ENCODE measurements at regions of chr9 and their contacts with region 1.

Region 1: DNA sequence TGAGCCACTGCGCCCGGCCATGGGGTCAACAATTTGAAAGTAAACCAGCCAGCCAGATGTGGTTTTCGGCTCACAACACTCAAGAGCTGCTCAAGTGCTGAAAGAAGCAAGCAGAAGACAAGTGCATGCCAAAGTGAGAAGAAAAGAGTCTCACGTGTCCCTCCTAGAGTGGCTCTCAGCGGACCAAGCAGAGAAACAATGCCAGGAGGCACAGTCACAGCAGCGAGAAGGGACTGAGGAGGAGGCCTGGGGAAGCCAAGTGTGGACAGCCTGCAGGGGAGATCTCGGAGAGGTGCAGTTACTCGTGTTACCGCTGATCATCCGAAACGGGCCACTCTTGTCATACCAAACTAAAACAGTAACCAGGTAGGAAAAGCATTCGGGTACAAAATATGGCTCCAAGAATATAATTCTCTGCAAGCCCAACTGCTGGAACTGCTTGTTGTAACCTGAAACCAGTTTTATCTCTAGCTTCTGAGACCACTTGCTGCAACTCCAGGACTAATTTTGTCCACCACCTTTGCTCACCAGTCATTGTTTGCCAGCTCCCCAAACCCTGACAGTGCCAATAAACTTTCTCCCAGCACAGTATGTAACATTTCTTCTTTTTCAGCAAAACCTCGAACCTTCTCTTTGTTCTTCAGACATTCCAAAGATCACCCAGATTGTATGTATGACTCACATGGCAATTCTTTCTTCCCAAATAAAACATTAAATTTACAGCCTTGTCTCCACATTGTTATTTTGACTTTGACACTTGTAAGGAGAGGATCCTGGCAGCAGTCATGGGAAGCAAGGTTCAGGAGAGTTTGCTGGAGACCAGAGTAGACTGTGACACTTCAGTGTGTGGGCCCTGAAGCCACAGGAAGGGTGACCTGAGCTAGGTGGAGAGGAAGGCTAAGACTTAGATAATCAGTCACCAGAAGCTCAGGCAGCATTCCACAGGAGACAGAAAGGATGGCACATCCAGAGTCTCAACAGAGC is 6.3 kb downstream of the SLC35D2 start:
- DNase-seq: peak; percentile 95 to 96
- H3K4me3 ChIP-seq: no peak overlapping the region
- H3K27ac ChIP-seq: peak overlapping the region; percentile 76 to 90 (median 87)
- H3K4me1 ChIP-seq: peaks cover 37 to 41% of the 10 kb centered on the region in 2 donors
- H3K27me3 ChIP-seq: no peaks in the 10 kb centered on the region
- CTCF ChIP-seq: peak in 3 of 6 experiments; percentile 10 to 49 (median 28)
- POLR2A ChIP-seq: peak in 1 of 2 donors; percentile 17

Region 2: DNA sequence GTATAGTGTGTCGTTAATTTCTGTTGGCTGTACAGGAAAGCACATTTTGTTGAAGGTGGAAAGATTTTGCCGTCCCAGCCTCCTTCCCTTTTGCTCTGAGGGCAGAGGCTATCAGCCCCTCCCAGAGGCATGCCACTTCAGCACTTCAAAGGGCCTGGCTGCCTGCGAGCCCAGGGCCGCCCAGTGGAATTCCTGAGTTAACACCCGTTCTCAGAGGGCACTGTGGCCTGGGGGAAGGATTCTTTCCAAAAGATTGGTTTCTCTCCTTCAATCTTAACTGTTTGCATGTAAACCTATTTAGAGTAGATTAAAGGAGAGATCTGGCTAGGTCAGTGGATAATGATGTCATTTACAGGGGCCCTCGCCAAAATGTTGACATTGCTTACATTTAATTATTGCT is 1298.2 kb before region 1 on chr9:
- intact Hi-C with region 1: no loop called
- DNase-seq: peak; percentile 79 to 82
- H3K4me3 ChIP-seq: no peak overlapping the region
- H3K27ac ChIP-seq: peak overlapping the region in 2 of 3 donors; percentile 39 to 59
- H3K4me1 ChIP-seq: peaks cover 41 to 53% of the 10 kb centered on the region in 2 donors
- H3K27me3 ChIP-seq: no peaks in the 10 kb centered on the region
- CTCF ChIP-seq: peak in 5 of 6 experiments; percentile 26 to 54 (median 49)
- POLR2A ChIP-seq: no peak

Region 3: GRCh38 chr9:96418074-96418809 is 41.1 kb after region 1 on chr9 and contains the start of gene ZNF367:
- intact Hi-C with region 1: loop called (anchors 5 kb)
- DNase-seq: peak; percentile 98 to 99
- H3K4me3 ChIP-seq: peak within 1 kb of the TSS; percentile 30 to 71 (median 60)
- H3K27ac ChIP-seq: peak within 1 kb of the TSS; percentile 90 to 100 (median 99)
- H3K4me1 ChIP-seq: peaks cover 5 to 28% of the 10 kb centered on the region in 2 donors
- H3K27me3 ChIP-seq: no peaks in the 10 kb centered on the region
- CTCF ChIP-seq: no peak
- POLR2A ChIP-seq: peak in 1 of 2 donors; percentile 24
- total RNA-seq, gene ZNF367: 1.2 to 1.8 (median 1.7) TPM